ENCODE measurements at regions of chr4 and their contacts with region 1.

Region 1: DNA sequence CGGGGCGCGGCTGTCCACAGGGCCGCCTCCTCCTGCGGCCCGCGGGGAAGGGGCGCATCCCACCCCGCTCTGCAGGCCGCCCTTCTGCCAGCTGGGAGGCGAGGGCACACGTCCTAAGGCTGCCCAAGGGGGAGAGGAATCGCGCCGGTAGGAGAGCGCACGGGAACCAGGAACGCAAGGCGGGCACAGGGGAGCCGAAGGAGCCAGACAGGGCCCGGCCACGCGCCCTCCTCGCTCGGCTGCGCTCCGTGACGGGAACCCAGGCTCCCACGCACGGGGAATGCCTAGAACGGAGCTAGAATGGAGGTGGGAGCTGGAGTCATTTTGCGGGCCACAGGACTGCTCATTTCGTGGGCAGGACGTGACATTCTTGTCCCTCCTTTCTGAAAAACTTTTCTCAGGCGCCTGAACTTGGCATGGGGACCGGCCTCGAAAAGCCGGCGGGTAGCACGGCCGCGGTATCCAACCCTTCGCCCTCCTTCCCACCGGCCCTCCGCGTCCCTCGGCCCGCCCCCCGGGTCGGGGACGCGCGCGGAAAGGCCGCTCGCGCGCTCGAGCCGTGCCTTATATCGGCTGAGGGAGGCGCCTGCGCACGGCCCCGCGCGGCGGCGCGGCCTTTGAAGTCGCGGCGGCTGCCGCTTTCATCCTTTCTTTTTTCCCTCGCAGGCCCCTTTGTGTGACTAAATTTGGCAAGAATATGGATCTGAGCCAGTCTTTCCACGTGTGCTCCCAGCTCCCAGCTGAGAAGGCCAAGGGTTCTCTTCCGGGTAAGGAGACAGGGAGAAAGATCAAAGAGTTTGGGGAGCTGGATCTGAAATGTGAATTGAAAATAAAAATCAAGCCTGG is 4.2 kb upstream of the LEF1 start:
- DNase-seq: peak; percentile 76
- ATAC-seq: peak; percentile 46
- H3K4me3 Mint-ChIP-seq: peak overlapping the region; percentile 96
- H3K27ac Mint-ChIP-seq: peak overlapping the region; percentile 95
- H3K4me1 Mint-ChIP-seq: peaks cover 38% of the 10 kb centered on the region
- H3K27me3 Mint-ChIP-seq: peaks cover 7% of the 10 kb centered on the region
- CTCF ChIP-seq: no peak

Region 2: GRCh38 chr4:108109997-108110416 is 63.0 kb before region 1 on chr4:
- CTCF ChIA-PET with region 1: interaction called, 8 read pairs
- POLR2A ChIA-PET with region 1: interaction called, 23 read pairs
- intact Hi-C with region 1: loop called (anchors 5 kb)
- DNase-seq: no peak
- ATAC-seq: peak; percentile 20
- H3K4me3 Mint-ChIP-seq: peak overlapping the region; percentile 44
- H3K27ac Mint-ChIP-seq: peak overlapping the region; percentile 96
- H3K4me1 Mint-ChIP-seq: peaks cover 88% of the 10 kb centered on the region
- H3K27me3 Mint-ChIP-seq: no peaks in the 10 kb centered on the region
- CTCF ChIP-seq: no peak

Region 3: DNA sequence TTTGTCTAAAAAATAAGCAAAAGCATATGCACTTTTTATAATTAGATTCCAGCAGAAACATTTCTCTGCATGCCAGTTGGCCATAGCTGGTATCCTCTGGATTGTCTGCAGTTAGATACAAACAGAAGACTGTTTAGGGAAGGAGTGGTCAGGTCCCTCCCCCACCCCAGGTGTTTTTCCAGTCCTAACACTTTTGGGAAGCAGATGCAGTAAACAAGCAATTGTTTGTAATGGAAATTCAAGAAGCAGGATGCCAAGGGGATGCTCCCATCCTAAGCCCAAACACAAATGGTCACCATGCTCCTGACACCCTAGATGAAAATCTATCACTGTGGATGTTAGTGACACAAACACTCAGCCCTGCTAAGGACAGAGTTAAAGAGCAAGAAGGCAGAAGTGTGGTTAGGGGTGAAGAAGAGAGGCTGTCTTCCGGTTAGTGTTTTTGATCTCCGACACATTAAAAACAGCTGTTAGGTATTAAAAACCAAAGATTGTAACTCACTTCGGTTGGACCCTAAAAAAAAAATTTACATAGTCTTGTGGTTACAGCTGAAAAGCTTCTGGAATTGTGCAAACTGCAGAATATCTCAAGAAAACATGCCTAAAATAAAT is 12.1 kb before region 1 on chr4:
- CTCF ChIA-PET with region 1: interaction called, 8 read pairs
- POLR2A ChIA-PET with region 1: interaction called, 25 read pairs
- intact Hi-C with region 1: no loop called
- DNase-seq: peak; percentile 19
- ATAC-seq: peak; percentile 50
- H3K4me3 Mint-ChIP-seq: peak overlapping the region; percentile 87
- H3K27ac Mint-ChIP-seq: peak overlapping the region; percentile 77
- H3K4me1 Mint-ChIP-seq: peaks cover 55% of the 10 kb centered on the region
- H3K27me3 Mint-ChIP-seq: no peaks in the 10 kb centered on the region
- CTCF ChIP-seq: no peak

Region 4: DNA sequence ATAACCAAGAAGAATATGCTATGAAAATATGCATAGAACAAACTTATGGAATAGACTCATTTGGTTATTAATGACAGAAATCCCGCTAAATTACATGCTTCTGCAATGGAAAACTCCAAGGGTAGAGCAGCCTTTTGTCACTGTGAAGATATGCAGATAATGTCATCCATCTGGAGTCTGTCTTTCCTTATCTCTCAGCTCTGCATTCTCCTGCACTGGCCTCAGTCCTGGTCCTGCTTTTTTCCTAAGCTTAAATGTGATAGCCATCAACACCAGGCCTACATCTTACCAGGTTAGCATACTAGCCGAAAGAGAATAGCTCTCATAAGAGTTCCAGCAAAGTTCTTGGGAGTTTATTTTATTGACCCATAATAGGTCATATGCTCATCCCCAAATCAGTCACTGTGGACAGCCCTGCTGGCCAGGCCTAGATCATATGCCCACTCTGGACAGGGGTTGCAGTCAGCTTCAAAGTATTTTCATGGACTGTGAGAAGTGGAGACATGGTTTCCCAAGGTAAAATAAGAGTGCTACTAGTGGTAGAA is 82.3 kb after region 1 on chr4:
- CTCF ChIA-PET with region 1: no interaction called
- POLR2A ChIA-PET with region 1: no interaction called
- intact Hi-C with region 1: no loop called
- DNase-seq: no peak
- ATAC-seq: no peak
- H3K4me3 Mint-ChIP-seq: no peak overlapping the region
- H3K27ac Mint-ChIP-seq: no peak overlapping the region
- H3K4me1 Mint-ChIP-seq: no peaks in the 10 kb centered on the region
- H3K27me3 Mint-ChIP-seq: no peaks in the 10 kb centered on the region
- CTCF ChIP-seq: no peak

Region 5: GRCh38 chr4:108355186-108355901 is 182.4 kb after region 1 on chr4:
- CTCF ChIA-PET with region 1: no interaction called
- POLR2A ChIA-PET with region 1: no interaction called
- intact Hi-C with region 1: loop called (anchors 10 kb)
- DNase-seq: peak; percentile 36
- ATAC-seq: peak; percentile 84
- H3K4me3 Mint-ChIP-seq: no peak overlapping the region
- H3K27ac Mint-ChIP-seq: peak overlapping the region; percentile 30
- H3K4me1 Mint-ChIP-seq: peaks cover 50% of the 10 kb centered on the region
- H3K27me3 Mint-ChIP-seq: peaks cover under 1% of the 10 kb centered on the region
- CTCF ChIP-seq: no peak

Region 6: DNA sequence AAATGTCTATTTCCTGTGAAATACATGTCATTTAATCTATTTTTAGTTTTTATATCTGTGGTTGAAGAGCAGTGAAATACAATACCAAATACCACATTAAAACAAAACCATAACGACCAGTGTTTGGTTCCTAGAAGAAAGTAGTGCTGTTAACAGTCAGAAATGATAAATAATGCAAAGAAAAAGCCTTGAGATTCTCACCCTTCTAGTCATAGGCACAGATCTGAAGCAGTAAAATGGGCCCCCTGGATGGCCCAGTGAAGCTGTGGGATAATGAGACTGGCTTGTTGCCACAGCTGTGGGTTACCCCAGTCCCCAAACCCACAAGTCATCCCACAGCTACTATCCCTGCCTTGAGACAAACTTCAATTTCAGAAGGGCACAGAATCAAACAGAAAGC is 310.1 kb after region 1 on chr4:
- CTCF ChIA-PET with region 1: no interaction called
- POLR2A ChIA-PET with region 1: no interaction called
- intact Hi-C with region 1: loop called (anchors 10 kb)
- DNase-seq: peak; percentile 70
- ATAC-seq: peak; percentile 73
- H3K4me3 Mint-ChIP-seq: peak overlapping the region; percentile 57
- H3K27ac Mint-ChIP-seq: peak overlapping the region; percentile 85
- H3K4me1 Mint-ChIP-seq: peaks cover 35% of the 10 kb centered on the region
- H3K27me3 Mint-ChIP-seq: no peaks in the 10 kb centered on the region
- CTCF ChIP-seq: no peak

Region 7: GRCh38 chr4:108512615-108513505 is 339.9 kb after region 1 on chr4:
- CTCF ChIA-PET with region 1: no interaction called
- POLR2A ChIA-PET with region 1: no interaction called
- intact Hi-C with region 1: loop called (anchors 5 kb)
- DNase-seq: peak; percentile 65
- ATAC-seq: peak; percentile 93
- H3K4me3 Mint-ChIP-seq: peak overlapping the region; percentile 62
- H3K27ac Mint-ChIP-seq: no peak overlapping the region
- H3K4me1 Mint-ChIP-seq: peaks cover 17% of the 10 kb centered on the region
- H3K27me3 Mint-ChIP-seq: no peaks in the 10 kb centered on the region
- CTCF ChIP-seq: peak; percentile 51

Measured in activated CD8-positive, alpha-beta T cell treated with anti-CD3 and anti-CD28 coated beads for 36 hours (primary cell).